HCT116 (cell line): ENCODE measurements at regions of chr7 and their contacts with region 1.

Region 1: GRCh38 chr7:117127585-117128168 is 174.4 kb downstream of the ST7 start:
- DNase-seq: peak; percentile 28
- ATAC-seq: peak; percentile 55
- H3K4me3 ChIP-seq: no peak overlapping the region
- H3K27ac ChIP-seq: no peak overlapping the region
- H3K4me1 ChIP-seq: peaks cover 13 to 33% of the 10 kb centered on the region in 2 experiments
- H3K27me3 ChIP-seq: no peaks in the 10 kb centered on the region
- CTCF ChIP-seq: peak; percentile 61 to 82 (median 68); a peak in 5 of 6 replicates
- POLR2A ChIP-seq: no peak
- RAD21 ChIP-seq: peak; percentile 74

Region 2: DNA sequence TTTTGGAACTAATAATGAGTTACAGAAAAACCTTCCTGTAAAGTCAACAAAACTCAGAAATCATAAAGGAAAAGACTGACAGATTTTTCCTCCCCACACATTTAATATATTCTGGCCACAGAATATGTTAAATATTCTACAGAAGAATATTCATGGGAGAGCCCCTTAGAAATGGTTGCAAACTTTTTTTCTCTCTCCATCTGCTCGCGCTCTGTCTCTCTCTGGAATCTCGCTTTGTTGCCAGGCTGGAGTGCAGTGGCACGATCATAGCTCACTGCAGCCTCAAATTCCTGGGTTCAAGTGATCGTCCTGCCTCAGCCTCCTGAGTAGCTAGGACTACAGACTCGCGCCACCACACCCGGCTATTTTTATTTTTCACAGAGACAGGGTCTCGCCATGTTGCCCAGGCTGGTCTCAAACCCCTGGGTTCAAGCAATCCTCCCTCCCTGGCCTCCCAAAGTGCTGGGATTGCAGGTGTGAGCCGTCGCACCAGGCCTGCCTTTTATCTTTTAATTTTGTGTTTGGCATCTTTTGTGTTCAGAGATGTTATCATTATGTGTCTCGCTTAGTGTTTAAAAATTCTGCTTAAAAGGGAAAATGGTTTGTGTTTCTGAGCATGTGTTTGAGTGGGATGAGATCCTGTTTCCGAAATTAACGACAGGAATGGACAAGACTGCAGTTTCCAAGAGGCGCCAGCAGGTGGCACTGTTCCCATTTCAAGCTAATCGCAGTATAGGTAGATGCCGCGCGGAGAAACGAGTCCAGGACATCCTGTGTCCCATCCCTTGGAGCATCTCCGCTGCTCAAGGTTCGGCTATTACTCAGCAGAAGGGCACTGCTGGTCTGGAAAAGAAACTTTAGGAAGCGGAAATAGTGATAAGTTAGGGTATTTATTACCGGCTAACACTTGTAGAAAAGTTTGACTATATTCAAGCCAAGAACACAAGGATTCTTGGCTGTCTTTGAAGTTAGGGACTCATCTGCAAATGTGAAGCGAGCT is 197.5 kb before region 1 on chr7:
- CTCF ChIA-PET with region 1: interaction called, 15 read pairs
- POLR2A ChIA-PET with region 1: no interaction called
- RAD21 ChIA-PET with region 1: no interaction called
- intact Hi-C with region 1: no loop called
- DNase-seq: peak; percentile 69
- ATAC-seq: peak; percentile 96
- H3K4me3 ChIP-seq: peak overlapping the region in 1 of 2 experiments; percentile 15; a peak in 1 of 4 replicates
- H3K27ac ChIP-seq: no peak overlapping the region
- H3K4me1 ChIP-seq: peaks cover 0 to 6% of the 10 kb centered on the region in 2 experiments; a peak in 2 of 4 replicates
- H3K27me3 ChIP-seq: no peaks in the 10 kb centered on the region
- CTCF ChIP-seq: peak; percentile 84 to 93 (median 86)
- POLR2A ChIP-seq: no peak
- RAD21 ChIP-seq: peak; percentile 89

Region 3: DNA sequence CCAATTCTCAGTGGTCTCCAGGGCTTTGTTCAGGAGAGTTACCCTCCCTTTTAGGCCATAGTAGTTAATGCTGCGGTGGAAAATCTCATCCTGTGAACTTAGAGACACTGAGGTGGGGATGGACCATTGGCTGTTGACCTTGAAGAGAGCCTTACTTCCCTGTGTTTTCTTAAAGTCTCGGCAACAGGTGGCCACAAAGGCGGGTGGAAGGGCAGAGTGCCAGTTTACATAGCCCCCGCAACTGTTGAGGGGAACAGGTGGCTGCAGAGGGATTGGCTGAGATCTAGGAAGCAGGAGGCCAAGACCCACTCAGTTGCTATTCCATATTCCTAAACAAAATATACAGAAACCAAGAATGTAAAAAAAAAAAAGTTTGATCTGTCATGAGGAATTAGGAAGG is 13.8 kb before region 1 on chr7:
- CTCF ChIA-PET with region 1: interaction called, 18 read pairs
- POLR2A ChIA-PET with region 1: no interaction called
- RAD21 ChIA-PET with region 1: no interaction called
- intact Hi-C with region 1: no loop called
- DNase-seq: no peak
- ATAC-seq: no peak
- H3K4me3 ChIP-seq: no peak overlapping the region
- H3K27ac ChIP-seq: no peak overlapping the region
- H3K4me1 ChIP-seq: no peaks in the 10 kb centered on the region
- H3K27me3 ChIP-seq: no peaks in the 10 kb centered on the region
- CTCF ChIP-seq: no peak
- POLR2A ChIP-seq: no peak
- RAD21 ChIP-seq: no peak

Region 4: DNA sequence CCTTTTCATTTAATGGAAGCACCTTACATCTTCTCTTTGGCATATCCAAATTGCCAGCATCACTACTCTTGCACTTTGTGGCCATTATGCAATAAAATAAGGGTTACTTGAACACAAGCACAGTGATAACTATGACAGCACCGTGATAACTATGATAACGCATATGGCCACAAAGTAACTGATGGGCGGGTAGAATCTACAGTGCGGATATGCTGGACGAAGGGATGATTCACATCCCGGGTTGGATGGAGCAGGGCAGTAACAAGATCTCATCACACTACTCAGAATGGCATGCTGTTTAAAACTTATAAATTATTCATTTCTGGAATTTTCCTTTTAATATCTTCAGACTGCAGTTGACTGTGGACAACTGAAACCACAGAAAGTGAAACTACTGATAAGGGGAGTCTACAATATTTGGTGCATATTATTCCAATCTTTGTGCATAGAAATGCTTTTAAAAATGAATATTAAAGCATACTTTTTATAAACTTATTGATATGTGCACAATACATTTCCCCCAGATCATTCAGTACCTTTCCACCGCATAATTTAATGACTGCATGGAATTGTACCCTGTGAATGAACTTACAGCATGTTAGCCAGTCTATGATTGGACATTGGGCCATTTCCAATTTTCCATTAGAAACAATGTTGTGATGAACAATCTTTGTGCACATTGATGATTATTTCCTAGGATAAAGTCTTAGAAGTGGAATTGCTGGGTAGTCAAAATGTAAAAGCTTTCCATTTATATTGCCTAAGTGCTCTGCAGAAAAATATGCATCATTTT is 58.7 kb after region 1 on chr7:
- CTCF ChIA-PET with region 1: no interaction called
- POLR2A ChIA-PET with region 1: no interaction called
- RAD21 ChIA-PET with region 1: no interaction called
- intact Hi-C with region 1: no loop called
- DNase-seq: no peak
- ATAC-seq: no peak
- H3K4me3 ChIP-seq: no peak overlapping the region
- H3K27ac ChIP-seq: no peak overlapping the region
- H3K4me1 ChIP-seq: no peaks in the 10 kb centered on the region
- H3K27me3 ChIP-seq: no peaks in the 10 kb centered on the region
- CTCF ChIP-seq: no peak
- POLR2A ChIP-seq: no peak
- RAD21 ChIP-seq: no peak